Activated CD4-positive, alpha-beta T cell treated with anti-CD3 and anti-CD28 coated beads for 36 hours (primary cell): ENCODE measurements at regions of chrX and their contacts with region 1.

Region 1: DNA sequence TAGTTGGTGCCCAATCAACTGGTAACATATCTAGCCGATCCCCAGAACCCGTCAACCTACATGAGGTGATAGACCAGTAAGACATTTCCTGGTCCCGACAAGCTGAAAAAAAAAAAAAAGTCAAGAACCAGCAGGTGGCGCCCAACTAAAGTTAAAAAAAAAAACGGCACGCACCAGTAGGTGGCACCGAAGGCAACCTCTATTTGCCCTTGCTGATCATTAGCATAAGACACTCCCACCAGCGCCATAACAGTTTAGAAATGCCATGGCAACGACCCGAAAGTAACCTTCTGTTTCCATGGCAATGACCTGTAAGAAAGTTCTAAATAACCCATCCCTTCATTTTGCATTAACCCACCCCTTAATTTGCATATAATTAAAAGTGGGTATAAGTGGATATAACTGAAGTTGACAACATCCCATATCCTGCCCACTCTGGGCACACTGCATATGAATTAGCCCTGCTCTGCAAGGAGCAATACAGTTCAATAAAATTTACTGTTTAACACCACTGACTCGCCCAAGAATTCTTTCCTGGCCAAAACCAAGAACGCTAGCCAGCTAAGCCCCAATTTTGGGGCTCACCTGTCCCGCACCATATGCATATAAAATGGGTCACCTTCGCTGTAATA is 83.9 kb upstream of the SPANXB1 start:
- DNase-seq: peak; percentile 52
- ATAC-seq: peak; percentile 42
- H3K4me3 Mint-ChIP-seq: no peak overlapping the region
- H3K27ac Mint-ChIP-seq: no peak overlapping the region
- H3K4me1 Mint-ChIP-seq: peaks cover 18% of the 10 kb centered on the region
- H3K27me3 Mint-ChIP-seq: no peaks in the 10 kb centered on the region

Region 2: DNA sequence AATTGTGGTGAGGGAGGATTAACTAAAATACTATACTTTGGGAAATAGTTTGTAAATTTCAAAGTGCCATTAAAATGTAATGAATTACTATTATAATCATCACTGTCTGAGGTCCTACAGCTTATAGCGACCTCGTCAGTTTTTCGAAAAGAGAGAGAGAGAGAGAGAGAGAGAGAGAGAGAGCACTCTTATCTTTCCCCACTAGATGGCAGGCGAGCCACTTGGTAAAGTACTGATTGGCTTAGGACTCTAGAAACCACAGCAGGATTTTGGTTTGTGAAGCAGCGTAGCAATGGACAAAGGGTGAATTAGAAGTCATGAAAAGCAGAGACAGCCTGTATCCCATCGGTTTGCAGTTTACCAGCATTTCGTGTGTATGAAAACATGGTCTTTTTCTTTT is 156.5 kb before region 1 on chrX:
- CTCF ChIA-PET with region 1: interaction called, 4 read pairs
- POLR2A ChIA-PET with region 1: no interaction called
- intact Hi-C with region 1: loop called in 1 of 2 experiments (anchors 5 kb)
- DNase-seq: peak; percentile 55
- ATAC-seq: peak; percentile 53
- H3K4me3 Mint-ChIP-seq: no peak overlapping the region
- H3K27ac Mint-ChIP-seq: no peak overlapping the region
- H3K4me1 Mint-ChIP-seq: peaks cover 12% of the 10 kb centered on the region
- H3K27me3 Mint-ChIP-seq: peaks cover 6% of the 10 kb centered on the region

Region 3: DNA sequence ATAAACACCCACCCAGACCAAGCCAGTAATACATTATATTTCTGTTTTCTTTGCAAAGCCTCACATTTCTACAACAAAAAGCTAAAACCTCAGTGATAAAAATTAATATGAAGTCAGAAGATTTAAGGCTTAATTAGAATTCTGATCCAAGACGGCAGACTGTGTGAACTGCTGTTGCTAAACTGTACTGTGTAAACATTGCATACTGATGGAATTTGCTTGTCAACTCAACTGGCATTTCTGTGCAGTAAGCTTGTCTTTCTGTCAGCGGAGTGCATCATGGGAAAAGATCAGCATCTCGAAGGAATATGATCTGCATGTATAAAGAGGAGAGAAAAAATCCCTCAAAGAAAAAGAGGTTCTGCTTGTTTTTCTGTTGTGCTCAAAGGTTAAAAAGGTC is 14.5 kb after region 1 on chrX:
- CTCF ChIA-PET with region 1: interaction called, 13 read pairs
- POLR2A ChIA-PET with region 1: no interaction called
- intact Hi-C with region 1: no loop called
- DNase-seq: no peak
- ATAC-seq: no peak
- H3K4me3 Mint-ChIP-seq: no peak overlapping the region
- H3K27ac Mint-ChIP-seq: no peak overlapping the region
- H3K4me1 Mint-ChIP-seq: no peaks in the 10 kb centered on the region
- H3K27me3 Mint-ChIP-seq: no peaks in the 10 kb centered on the region

Region 4: DNA sequence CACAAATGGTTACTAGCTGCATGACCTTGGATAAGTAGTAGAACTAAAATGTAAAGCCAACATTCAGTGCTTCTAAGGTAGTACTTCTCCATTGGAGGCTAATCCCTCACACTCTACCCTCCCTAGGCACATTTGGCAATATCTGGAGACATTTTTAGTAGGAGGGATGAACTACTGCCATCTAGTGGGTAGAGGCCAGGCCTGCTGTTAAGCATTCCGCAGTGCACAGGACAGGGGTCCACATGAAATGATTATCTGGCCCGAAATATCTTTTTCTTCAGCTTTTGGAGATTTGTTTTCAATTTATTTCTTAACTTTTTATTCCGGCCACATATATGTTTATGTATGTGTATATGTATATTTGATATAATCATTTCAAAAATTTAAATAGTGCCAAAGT is 359.8 kb after region 1 on chrX:
- CTCF ChIA-PET with region 1: no interaction called
- POLR2A ChIA-PET with region 1: no interaction called
- intact Hi-C with region 1: loop called (anchors 2 to 5 kb)
- DNase-seq: peak; percentile 4
- ATAC-seq: no peak
- H3K4me3 Mint-ChIP-seq: no peak overlapping the region
- H3K27ac Mint-ChIP-seq: no peak overlapping the region
- H3K4me1 Mint-ChIP-seq: no peaks in the 10 kb centered on the region
- H3K27me3 Mint-ChIP-seq: no peaks in the 10 kb centered on the region